ENCODE measurements at regions of chr6 and their contacts with region 1.

Region 1: GRCh38 chr6:159134701-159135364 is 34.4 kb upstream of the FNDC1 start:
- DNase-seq: peak; percentile 83
- H3K4me3 Mint-ChIP-seq: no peak overlapping the region
- H3K27ac Mint-ChIP-seq: no peak overlapping the region
- H3K4me1 Mint-ChIP-seq: no peaks in the 10 kb centered on the region
- H3K27me3 Mint-ChIP-seq: peaks cover 58% of the 10 kb centered on the region

Region 2: GRCh38 chr6:158780988-158781708 is 353.7 kb before region 1 on chr6:
- CTCF ChIA-PET with region 1: no interaction called
- DNase-seq: no peak
- H3K4me3 Mint-ChIP-seq: no peak overlapping the region
- H3K27ac Mint-ChIP-seq: peak overlapping the region; percentile 28
- H3K4me1 Mint-ChIP-seq: peaks cover 26% of the 10 kb centered on the region
- H3K27me3 Mint-ChIP-seq: no peaks in the 10 kb centered on the region

Region 3: GRCh38 chr6:158972241-158973233 is 162.3 kb before region 1 on chr6:
- CTCF ChIA-PET with region 1: interaction called, 11 read pairs
- DNase-seq: no peak
- H3K4me3 Mint-ChIP-seq: no peak overlapping the region
- H3K27ac Mint-ChIP-seq: no peak overlapping the region
- H3K4me1 Mint-ChIP-seq: no peaks in the 10 kb centered on the region
- H3K27me3 Mint-ChIP-seq: no peaks in the 10 kb centered on the region

Region 4: GRCh38 chr6:158999666-159000403 is 135.0 kb before region 1 on chr6 and contains the start of gene RSPH3:
- CTCF ChIA-PET with region 1: interaction called, 186 read pairs
- DNase-seq: peak; percentile 94
- H3K4me3 Mint-ChIP-seq: peak within 1 kb of the TSS; percentile 87
- H3K27ac Mint-ChIP-seq: peak within 1 kb of the TSS; percentile 82
- H3K4me1 Mint-ChIP-seq: peaks cover 25% of the 10 kb centered on the region
- H3K27me3 Mint-ChIP-seq: peaks cover 10% of the 10 kb centered on the region

Region 5: DNA sequence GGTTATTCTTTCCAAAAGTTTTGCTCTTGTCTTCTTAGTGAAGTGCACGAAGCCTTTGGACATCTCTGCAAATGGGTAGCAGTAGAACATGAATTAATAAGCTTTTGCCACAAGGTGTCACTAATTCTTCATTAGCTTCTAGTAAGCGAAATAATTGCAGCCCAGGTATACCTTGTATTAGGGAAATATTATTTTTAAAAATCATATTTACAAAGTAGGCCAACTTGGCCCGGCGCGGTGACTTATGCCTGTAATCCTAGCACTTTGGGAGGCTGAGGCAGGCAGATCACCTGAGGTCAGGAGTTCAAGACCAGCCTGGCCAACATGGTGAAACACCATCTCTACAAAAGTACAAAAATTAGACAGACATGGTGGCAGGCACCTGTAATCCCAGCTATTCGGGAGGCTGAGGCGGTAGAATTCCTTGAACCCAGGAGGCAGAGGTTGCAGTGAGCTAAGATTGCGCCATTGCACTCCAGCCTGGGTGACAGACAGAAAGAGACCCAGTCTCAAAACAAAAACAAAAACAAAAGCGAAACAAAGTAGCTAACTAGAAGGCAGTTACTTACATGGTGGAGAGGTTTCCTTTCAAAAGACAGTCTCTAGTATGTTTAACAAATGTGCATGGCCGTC is 126.1 kb before region 1 on chr6:
- CTCF ChIA-PET with region 1: interaction called, 186 read pairs
- DNase-seq: peak; percentile 25
- H3K4me3 Mint-ChIP-seq: no peak overlapping the region
- H3K27ac Mint-ChIP-seq: no peak overlapping the region
- H3K4me1 Mint-ChIP-seq: peaks cover 23% of the 10 kb centered on the region
- H3K27me3 Mint-ChIP-seq: no peaks in the 10 kb centered on the region

Region 6: GRCh38 chr6:159042003-159042825 is 92.6 kb before region 1 on chr6:
- CTCF ChIA-PET with region 1: interaction called, 18 read pairs
- DNase-seq: peak; percentile 83
- H3K4me3 Mint-ChIP-seq: peak overlapping the region; percentile 96
- H3K27ac Mint-ChIP-seq: peak overlapping the region; percentile 98
- H3K4me1 Mint-ChIP-seq: peaks cover 66% of the 10 kb centered on the region
- H3K27me3 Mint-ChIP-seq: no peaks in the 10 kb centered on the region

Region 7: DNA sequence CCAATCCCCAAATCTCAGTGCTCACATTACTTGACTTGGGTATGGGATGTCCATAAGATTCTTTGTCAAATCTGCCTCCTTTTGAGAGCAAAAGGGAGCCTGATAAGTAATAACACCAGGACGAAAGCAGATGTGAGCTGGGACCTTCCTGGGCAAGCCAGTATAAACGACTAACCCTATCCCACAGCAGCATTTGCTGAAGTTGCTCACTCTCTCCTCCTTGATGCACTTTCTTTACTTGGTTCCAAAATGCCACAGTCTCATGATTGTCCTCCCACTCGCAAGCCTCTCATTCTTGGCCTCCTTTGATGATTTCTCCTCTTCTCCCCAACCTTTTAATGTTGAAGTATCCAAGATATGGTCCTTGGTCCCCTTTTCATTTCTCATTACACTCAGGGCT is 45.4 kb before region 1 on chr6:
- CTCF ChIA-PET with region 1: no interaction called
- DNase-seq: no peak
- H3K4me3 Mint-ChIP-seq: no peak overlapping the region
- H3K27ac Mint-ChIP-seq: no peak overlapping the region
- H3K4me1 Mint-ChIP-seq: peaks cover 19% of the 10 kb centered on the region
- H3K27me3 Mint-ChIP-seq: peaks cover 3% of the 10 kb centered on the region

Region 8: DNA sequence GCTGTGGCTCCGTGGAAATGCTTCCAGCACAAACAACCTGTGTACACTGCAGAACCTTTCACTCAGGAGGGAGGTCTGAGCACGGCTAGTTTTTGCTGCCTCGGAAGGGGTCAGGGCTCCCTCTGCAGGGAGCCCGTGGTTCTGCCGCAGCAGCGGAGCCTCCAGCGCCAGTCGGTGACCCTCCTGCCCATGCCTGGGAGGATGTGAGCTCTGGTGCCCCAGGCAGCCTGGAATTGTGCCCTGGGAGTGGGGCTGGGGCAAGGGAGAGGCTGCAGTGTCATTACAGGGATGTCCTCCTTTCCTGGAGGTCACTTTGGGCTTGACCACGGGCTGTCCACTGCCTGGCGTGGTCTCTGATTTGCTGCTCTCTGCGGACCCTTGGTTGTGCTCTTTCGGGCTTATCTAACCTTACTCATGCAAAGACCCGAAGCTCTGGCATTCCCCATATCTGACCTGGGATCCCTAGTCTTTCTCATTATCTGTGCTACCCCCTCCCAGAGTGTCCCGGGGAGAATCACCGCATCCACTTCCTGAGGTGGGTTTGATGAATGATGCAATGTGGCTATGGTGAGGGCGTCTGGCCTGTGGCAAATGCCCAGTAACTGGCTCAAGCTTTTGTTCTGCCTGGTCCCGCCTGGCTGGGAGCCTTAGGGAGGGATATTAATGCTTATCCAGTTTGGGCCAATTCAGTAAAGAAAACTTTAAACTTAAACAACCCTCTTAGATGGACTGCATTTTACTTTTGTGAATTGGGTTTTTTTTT is 30.5 kb before region 1 on chr6:
- CTCF ChIA-PET with region 1: interaction called, 40 read pairs
- DNase-seq: peak; percentile 84
- H3K4me3 Mint-ChIP-seq: no peak overlapping the region
- H3K27ac Mint-ChIP-seq: peak overlapping the region; percentile 64
- H3K4me1 Mint-ChIP-seq: peaks cover 81% of the 10 kb centered on the region
- H3K27me3 Mint-ChIP-seq: peaks cover 10% of the 10 kb centered on the region

Region 9: DNA sequence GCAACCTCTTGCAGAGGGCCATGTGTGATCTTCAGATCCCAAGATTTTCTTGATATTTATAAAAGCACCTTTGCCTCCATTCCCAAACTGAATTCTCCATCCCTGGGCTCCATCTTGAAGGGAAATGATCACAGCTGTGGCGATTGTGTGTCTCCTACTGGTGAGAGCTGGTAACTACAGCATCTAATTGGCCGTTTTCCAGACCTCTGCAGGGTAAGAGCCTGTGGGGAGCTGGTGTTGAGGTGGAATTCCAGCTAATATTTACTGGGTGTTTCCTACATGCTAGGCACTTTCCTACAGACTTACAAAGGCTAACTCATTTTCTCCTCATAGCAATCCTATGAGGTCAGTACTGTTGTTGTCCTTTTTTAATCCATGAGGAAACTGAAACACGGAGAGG is 24.8 kb before region 1 on chr6:
- CTCF ChIA-PET with region 1: interaction called, 40 read pairs
- DNase-seq: peak; percentile 44
- H3K4me3 Mint-ChIP-seq: no peak overlapping the region
- H3K27ac Mint-ChIP-seq: no peak overlapping the region
- H3K4me1 Mint-ChIP-seq: peaks cover 60% of the 10 kb centered on the region
- H3K27me3 Mint-ChIP-seq: peaks cover 2% of the 10 kb centered on the region

Region 10: DNA sequence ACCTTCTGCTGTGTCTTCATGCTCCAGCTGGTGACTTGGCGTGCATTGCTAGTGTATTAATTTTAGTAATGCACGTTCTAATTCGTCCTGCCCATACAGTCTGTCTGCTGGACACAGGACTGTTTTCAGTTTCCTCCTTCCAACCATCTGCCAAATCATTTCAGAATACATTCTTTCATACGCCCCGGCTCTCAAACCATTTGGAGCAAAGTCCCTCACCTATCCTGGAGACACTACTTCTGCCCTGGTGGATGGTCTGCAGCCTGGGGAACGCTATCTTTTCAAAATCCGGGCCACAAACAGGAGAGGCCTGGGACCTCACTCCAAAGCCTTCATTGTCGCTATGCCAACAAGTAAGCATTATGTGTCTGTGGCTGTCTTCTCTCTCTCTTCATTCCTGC is 94.8 kb after region 1 on chr6:
- CTCF ChIA-PET with region 1: no interaction called
- DNase-seq: no peak
- H3K4me3 Mint-ChIP-seq: no peak overlapping the region
- H3K27ac Mint-ChIP-seq: no peak overlapping the region
- H3K4me1 Mint-ChIP-seq: no peaks in the 10 kb centered on the region
- H3K27me3 Mint-ChIP-seq: peaks cover 40% of the 10 kb centered on the region

Measured in activated naive CD4-positive, alpha-beta T cell treated with anti-CD3 and anti-CD28 coated beads, Interleukin-2, amount 10 ng/mL, durations not matched to agents 7 days and 5 days (primary cell).